ENCODE measurements at regions of chr18 and their contacts with region 1.

Region 1: GRCh38 chr18:35290073-35290735 is at the start of gene ZSCAN30:
- DNase-seq: peak; percentile 98
- total RNA-seq, gene ZSCAN30: 18.6 TPM

Region 2: GRCh38 chr18:35322486-35323458 is 32.6 kb after region 1 on chr18:
- intact Hi-C with region 1: no loop called
- DNase-seq: no peak

Region 3: DNA sequence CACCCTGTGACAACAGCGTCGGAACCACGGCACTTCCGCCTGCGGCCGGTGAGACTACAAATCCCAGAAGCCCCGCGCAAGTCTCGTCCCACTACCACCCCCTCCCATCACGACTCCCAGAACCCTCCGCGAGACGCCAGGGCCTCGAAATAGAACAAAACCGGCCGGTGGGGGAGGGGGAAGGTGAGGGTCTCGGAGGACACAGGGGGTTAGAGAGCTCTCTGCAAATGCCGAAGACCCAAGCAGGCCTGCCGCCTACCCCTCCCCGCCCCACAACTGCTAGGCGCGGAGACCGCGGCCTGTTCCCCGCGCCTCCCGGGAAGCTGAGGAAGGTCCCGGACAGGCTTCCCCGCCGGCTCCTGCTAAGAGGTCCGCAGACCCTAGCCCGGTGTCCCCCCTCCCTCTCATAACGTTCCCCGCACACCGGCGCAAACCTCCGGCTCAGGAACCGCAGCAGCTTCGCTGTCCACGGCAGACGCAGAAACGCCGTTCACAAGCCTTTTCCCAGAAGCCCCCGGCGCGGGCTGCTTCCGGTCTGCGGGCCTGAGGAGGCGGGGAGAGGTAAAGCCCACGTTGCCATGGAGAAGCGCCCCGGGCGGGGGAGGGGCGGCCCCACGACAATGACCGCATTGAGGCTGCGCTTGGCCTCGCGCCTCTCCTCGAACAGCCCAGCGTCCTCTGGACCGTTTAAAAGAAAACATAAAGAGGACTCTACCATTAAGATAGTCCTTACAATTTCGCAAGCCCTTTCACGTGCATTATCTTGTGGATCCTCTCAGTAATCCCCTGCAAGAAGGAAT is 53.9 kb after region 1 on chr18 and contains the start of gene ZNF24:
- intact Hi-C with region 1: loop called (anchors 5 kb)
- DNase-seq: peak; percentile 97
- total RNA-seq, gene ZNF24: 44.2 TPM

Region 4: DNA sequence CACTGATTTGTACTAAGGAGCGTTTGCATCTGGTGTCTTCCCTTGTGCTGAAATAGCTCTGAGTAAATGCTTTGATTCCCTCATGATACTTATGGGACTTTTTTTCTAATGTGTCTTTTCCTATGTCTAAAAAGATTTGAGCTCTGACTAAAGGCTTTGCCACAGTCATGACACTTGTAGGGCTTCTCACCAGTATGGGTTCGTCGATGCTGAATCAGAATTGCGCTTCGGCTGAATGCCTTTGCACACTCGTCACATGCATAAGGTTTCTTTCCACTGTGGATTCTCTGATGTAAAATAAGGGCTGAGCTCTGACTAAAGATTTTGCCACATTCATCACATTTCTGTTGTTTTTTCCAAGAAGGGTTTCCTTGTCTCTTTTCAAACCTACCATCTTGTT is 78.9 kb after region 1 on chr18:
- intact Hi-C with region 1: no loop called
- DNase-seq: no peak